ENCODE measurements at regions of chr2 and their contacts with region 1.

Region 1: GRCh38 chr2:112749755-112750559 is 14.5 kb downstream of the CKAP2L start:
- DNase-seq: no peak
- H3K4me3 ChIP-seq: no peak overlapping the region; the same call in 1 of the 2 replicates
- H3K27me3 ChIP-seq: no peaks in the 10 kb centered on the region
- CTCF ChIP-seq: peak; percentile 99

Region 2: DNA sequence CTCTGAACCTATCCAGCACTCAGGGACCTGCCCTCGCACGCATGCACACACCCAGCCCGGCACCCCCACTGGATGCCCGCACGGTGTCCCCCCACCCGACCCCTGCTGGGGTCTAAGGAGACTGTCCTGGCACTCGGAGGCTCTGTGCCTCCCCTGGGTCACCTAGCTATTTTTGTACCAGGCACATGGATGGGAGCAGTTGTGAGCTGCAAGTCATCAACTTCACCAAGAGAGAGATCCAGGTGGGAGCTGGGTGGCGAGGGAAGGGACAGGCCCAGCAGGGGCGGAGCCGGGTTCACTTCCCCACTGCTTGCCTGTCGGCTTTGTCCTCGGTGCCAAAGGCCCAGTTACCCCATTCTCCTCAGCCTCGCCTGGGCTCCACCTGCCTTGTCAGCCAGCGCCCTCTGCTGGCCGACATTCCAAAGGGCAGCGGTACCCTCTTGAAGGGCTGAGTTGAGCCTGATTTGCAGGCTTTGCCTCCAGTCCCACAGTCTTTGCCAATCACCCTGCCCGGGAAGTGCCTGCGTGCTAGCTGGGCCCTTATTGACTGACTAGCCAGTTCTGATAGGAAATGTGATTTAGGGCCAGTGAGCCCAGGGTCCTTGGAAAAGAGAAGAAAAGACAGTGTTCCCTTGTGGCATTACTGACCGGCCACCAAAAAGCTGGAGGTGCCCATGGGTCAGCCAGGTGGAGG is 23.3 kb before region 1 on chr2:
- CTCF ChIA-PET with region 1: interaction called, 17 read pairs
- POLR2A ChIA-PET with region 1: no interaction called
- DNase-seq: no peak
- H3K4me3 ChIP-seq: no peak overlapping the region
- H3K27me3 ChIP-seq: no peaks in the 10 kb centered on the region
- CTCF ChIP-seq: peak; percentile 98

Region 3: DNA sequence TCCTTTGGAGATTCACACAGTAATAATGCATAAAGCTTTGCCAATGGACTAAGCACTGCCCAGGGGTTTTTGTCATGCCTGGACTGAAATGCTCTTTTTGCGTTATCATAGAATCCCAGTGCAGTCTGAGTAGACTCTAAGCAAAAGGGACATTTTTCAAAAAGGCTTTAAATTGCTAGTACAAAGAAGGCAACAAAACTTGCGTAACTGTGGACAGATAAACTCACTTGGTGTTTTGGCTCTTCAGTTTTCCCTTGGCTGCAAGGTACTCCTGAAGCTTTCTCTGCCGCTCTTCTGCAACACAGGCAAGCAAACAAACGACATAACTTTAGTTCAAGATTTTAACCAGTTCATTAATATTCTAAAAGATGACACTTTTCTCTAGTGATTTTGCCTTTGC is 12.3 kb after region 1 on chr2:
- CTCF ChIA-PET with region 1: interaction called, 25 read pairs
- POLR2A ChIA-PET with region 1: no interaction called
- DNase-seq: no peak
- H3K4me3 ChIP-seq: no peak overlapping the region
- H3K27me3 ChIP-seq: no peaks in the 10 kb centered on the region
- CTCF ChIP-seq: no peak

Region 4: DNA sequence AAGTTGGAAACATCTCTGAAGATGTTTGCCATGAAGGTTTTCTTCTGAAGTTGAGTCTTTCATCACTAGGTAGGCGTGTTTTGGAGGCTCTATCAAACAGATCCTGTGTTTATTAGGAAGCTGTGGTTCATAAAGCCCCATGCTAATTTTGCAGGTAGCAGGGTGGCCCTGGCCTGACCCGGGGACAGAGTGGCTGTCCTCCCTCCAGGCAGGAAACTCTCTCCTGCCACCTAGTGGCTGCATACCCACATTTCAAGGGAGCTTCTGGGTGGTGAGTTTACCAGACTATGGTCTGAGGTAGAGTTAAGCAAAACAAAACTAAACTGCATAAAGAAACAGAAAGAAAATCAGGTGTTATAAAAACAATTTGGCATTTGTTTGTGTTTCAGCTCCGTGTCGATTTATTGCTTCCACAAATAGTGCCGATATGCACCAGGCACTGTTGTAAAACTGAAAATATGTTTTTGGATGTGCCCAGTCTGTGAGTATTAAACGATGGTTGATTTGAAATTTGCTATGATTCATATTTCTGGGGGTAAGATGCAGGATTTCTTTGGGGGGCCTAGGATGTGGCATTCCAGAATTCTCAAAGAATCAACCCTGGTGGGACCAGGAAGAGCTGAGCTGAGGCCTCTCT is 135.0 kb after region 1 on chr2:
- CTCF ChIA-PET with region 1: interaction called, 38 read pairs
- POLR2A ChIA-PET with region 1: interaction called, 3 read pairs
- DNase-seq: no peak
- H3K4me3 ChIP-seq: no peak overlapping the region
- H3K27me3 ChIP-seq: no peaks in the 10 kb centered on the region
- CTCF ChIP-seq: peak; percentile 69

Region 5: DNA sequence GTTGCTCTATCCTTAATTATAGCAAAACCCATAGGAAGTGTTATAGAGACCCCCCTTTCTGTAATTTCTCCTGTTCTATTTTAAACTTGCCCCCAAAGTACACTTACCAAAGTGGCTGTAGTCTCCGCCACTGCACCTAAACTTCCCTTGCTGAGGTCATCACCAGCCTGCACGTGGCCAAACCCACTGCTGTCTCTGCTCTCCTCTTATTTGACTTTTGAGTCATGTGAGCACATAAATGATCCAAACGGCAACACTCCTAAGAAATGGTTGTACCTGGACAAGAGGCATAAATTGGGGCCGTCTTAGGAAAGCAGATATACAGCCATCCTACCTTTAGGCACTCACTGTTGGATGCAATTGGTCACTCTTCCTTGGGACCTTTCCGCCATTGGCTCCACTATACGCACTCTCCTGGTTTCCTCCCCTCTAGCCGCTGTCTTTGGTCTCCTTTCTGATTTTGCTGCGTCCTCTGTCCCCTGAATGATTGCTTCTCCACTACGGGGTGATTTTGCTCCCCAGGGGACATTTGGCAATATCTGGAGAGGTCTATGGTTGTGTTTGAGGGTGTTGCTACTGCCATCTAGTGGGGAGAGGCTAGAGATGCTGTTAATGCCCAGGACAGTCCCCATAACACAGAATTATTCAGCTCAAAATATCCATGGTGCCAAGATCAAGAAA is 208.6 kb after region 1 on chr2:
- CTCF ChIA-PET with region 1: interaction called, 30 read pairs
- POLR2A ChIA-PET with region 1: no interaction called
- DNase-seq: no peak
- H3K4me3 ChIP-seq: no peak overlapping the region
- H3K27me3 ChIP-seq: peaks cover 7% of the 10 kb centered on the region
- CTCF ChIP-seq: peak; percentile 86

Measured in BJ (cell line).